Activated CD8-positive, alpha-beta T cell treated with anti-CD3 and anti-CD28 coated beads for 36 hours (primary cell): ENCODE measurements at regions of chr7 and their contacts with region 1.

Region 1: DNA sequence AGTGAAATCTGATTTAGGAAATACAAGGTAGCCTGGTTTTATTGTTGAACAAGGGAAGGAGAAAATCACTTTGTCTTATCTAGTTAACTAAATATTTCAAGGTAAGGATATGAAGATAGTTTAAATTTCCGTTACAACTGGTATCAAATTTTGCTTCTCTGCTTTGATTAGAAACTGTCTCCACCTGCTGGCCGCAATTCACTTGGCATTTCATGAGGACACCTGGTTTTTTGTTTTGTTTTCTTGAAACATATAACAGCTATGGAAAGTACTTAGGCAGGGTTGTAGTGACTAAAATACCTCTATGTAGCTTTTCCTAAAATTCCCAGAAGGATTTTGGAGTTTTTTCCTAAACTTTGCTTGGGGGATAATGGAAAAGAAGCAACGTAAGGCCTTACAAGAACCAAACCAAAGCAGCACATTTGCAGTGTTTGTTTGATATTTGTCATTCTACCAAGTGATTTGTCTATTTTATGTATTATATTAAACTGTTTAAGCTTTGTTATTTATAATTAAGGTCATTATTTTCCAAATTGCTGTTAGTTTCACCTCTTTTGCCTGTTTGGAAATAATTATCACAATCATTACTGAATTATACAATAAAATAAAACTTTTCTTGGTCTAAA is 73.6 kb downstream of the AHCYL2 start:
- DNase-seq: peak; percentile 79
- ATAC-seq: no peak
- H3K4me3 Mint-ChIP-seq: no peak overlapping the region
- H3K27ac Mint-ChIP-seq: no peak overlapping the region
- H3K4me1 Mint-ChIP-seq: no peaks in the 10 kb centered on the region
- H3K27me3 Mint-ChIP-seq: no peaks in the 10 kb centered on the region
- CTCF ChIP-seq: peak; percentile 82

Region 2: DNA sequence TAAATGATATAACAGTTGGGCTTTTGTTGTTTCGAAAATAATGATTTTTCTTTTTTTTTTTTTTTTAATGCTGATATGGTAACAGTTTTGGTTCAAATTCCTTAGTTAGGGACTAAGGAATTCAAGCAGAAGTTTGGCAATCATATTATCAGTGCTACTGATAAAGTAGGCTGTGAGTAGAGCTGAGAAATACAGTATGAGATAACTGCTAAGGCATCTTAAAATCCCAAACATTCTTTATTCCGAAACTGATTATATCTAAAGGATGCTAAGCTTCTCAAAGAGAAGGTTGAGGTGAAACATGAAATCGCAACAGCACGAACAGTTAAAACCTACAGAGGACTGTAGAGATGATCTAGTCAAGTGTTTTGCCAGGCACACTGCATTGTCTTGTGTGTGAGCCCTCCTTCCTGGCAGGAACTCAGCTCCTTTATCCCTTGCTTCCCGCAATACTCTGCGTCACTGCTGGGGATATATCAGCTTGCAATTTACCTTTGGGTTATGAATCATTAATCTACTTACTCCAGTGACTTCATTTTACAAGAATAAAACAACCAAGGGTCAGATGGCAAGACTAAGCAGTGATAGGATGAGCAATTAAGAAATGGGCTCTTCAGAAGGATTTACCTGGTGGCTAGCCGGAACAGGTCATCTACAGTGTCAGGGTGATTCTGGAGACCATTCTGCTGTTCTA is 324.0 kb before region 1 on chr7:
- CTCF ChIA-PET with region 1: no interaction called
- POLR2A ChIA-PET with region 1: no interaction called
- intact Hi-C with region 1: no loop called
- DNase-seq: no peak
- ATAC-seq: no peak
- H3K4me3 Mint-ChIP-seq: no peak overlapping the region
- H3K27ac Mint-ChIP-seq: no peak overlapping the region
- H3K4me1 Mint-ChIP-seq: no peaks in the 10 kb centered on the region
- H3K27me3 Mint-ChIP-seq: no peaks in the 10 kb centered on the region
- CTCF ChIP-seq: no peak

Region 3: DNA sequence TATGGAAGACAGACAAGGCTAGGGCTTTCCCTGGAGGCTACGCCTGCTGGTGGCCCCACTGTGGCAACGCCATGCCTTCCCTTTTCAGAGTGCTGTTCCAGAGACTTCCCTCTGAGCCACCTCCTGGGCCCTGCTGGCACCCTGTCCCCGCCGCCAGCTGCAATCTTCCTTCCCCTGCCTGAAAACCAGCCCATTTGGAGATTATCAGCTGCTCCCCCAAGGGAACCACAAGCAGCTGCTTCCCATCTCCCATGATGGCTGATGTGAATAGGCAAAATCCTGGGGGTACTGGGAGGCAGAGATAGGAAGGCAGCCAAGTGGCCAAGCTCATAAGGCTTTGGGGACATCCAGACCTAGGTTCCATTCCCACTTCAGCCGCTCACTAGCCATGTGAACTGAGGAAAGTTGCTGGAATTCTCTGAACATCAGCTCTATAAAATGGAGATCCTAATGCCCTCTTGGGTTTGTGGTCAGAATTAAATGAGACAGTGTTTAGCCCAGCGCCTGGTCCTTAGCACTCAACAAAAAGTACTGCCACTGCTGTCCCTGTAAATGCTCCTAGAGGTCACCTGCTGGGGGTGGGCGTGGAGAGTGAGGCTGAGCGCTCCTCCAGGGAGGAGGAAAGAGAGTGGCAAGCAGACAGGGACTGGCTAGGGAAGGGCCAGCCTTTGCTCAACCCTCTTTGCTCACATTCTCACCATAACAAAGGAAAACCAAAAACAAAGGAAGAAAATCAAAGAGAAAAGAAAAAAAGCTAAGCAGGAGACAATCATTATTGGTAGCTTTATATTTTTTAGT is 148.0 kb before region 1 on chr7:
- CTCF ChIA-PET with region 1: no interaction called
- POLR2A ChIA-PET with region 1: no interaction called
- intact Hi-C with region 1: no loop called
- DNase-seq: no peak
- ATAC-seq: no peak
- H3K4me3 Mint-ChIP-seq: no peak overlapping the region
- H3K27ac Mint-ChIP-seq: no peak overlapping the region
- H3K4me1 Mint-ChIP-seq: peaks cover 6% of the 10 kb centered on the region
- H3K27me3 Mint-ChIP-seq: no peaks in the 10 kb centered on the region
- CTCF ChIP-seq: no peak

Region 4: GRCh38 chr7:129224251-129225205 is 73.9 kb before region 1 on chr7 and contains the start of gene AHCYL2:
- CTCF ChIA-PET with region 1: interaction called, 101 read pairs
- POLR2A ChIA-PET with region 1: interaction called, 5 read pairs
- intact Hi-C with region 1: no loop called
- DNase-seq: peak; percentile 98
- ATAC-seq: peak; percentile 93
- H3K4me3 Mint-ChIP-seq: peak within 1 kb of the TSS; percentile 79
- H3K27ac Mint-ChIP-seq: peak within 1 kb of the TSS; percentile 91
- H3K4me1 Mint-ChIP-seq: peaks cover 25% of the 10 kb centered on the region
- H3K27me3 Mint-ChIP-seq: no peaks in the 10 kb centered on the region
- CTCF ChIP-seq: no peak
- total RNA-seq, gene AHCYL2: 8.1 to 9.6 TPM

Region 5: DNA sequence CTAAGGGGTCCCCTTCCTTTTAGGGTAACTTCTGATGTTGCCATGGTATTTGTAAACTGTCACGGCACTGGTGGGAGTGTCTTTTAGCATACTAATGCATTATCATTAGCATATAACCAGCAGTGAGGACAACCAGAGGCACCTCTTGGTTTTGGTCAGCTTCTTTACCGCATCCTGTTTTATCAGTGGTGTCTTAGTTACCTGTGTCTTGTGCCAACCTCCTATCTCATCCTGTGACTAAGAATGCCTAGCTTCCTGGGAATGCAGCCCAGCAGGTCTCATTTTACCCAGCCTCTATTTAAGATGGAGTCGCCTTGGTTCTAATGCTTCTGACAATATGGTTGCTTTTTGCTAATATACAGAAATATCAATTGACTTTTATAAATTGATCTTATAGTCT is 18.6 kb before region 1 on chr7:
- CTCF ChIA-PET with region 1: interaction called, 19 read pairs
- POLR2A ChIA-PET with region 1: no interaction called
- intact Hi-C with region 1: no loop called
- DNase-seq: peak; percentile 10
- ATAC-seq: no peak
- H3K4me3 Mint-ChIP-seq: no peak overlapping the region
- H3K27ac Mint-ChIP-seq: no peak overlapping the region
- H3K4me1 Mint-ChIP-seq: peaks cover 5% of the 10 kb centered on the region
- H3K27me3 Mint-ChIP-seq: no peaks in the 10 kb centered on the region
- CTCF ChIP-seq: no peak

Region 6: GRCh38 chr7:129285111-129285510 is 13.3 kb before region 1 on chr7:
- CTCF ChIA-PET with region 1: interaction called, 19 read pairs
- POLR2A ChIA-PET with region 1: no interaction called
- intact Hi-C with region 1: no loop called
- DNase-seq: no peak
- ATAC-seq: no peak
- H3K4me3 Mint-ChIP-seq: no peak overlapping the region
- H3K27ac Mint-ChIP-seq: no peak overlapping the region
- H3K4me1 Mint-ChIP-seq: no peaks in the 10 kb centered on the region
- H3K27me3 Mint-ChIP-seq: no peaks in the 10 kb centered on the region
- CTCF ChIP-seq: no peak

Region 7: GRCh38 chr7:129311429-129311828 is 13.0 kb after region 1 on chr7:
- CTCF ChIA-PET with region 1: interaction called, 12 read pairs
- POLR2A ChIA-PET with region 1: no interaction called
- intact Hi-C with region 1: no loop called
- DNase-seq: no peak
- ATAC-seq: no peak
- H3K4me3 Mint-ChIP-seq: no peak overlapping the region
- H3K27ac Mint-ChIP-seq: no peak overlapping the region
- H3K4me1 Mint-ChIP-seq: no peaks in the 10 kb centered on the region
- H3K27me3 Mint-ChIP-seq: no peaks in the 10 kb centered on the region
- CTCF ChIP-seq: no peak